ENCODE measurements at regions of chr15 and their contacts with region 1.

Region 1: DNA sequence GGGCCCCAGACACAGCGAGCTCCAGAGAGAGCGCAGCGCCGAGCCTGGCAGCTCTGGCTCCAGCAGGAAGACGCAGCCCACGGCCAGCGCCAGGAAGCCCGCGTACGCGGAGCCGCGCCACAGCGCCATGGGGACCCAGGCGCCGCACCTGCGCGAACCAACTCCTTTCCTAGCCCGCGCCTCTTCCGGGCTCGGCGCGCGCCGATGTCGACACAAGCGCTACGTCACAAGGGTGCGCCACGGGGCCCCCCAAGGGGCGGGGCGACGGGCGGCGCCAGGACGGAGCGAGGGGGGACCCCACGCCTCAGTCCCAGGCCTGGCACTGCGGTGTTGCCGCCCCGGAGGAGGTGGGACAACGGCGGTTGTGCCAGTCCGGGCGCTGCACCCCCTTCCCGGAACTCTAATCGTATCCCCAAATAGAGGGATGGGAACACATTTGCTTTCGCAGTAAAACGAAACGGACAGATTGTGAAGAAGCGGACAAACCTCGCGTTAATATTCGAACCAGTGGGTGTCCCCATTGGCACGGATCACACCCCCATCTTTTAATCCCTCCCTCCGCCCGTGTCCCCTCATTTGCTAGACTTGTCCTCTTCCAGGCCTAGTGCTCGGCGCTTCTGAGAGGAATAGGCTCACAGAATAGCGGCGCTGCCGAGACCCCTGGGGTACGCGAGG is at the start of gene ADPGK:
- DNase-seq: peak; percentile 75 to 94
- H3K4me3 ChIP-seq: peak within 1 kb of the TSS; percentile 64
- H3K27ac ChIP-seq: peak within 1 kb of the TSS; percentile 55
- H3K4me1 ChIP-seq: peaks cover 21% of the 10 kb centered on the region
- H3K27me3 ChIP-seq: peaks cover 8% of the 10 kb centered on the region; the same call in 1 of the 2 replicates
- CTCF ChIP-seq: no peak
- total RNA-seq, gene ADPGK: 40.3 and 48.6 TPM in 2 replicates

Region 2: DNA sequence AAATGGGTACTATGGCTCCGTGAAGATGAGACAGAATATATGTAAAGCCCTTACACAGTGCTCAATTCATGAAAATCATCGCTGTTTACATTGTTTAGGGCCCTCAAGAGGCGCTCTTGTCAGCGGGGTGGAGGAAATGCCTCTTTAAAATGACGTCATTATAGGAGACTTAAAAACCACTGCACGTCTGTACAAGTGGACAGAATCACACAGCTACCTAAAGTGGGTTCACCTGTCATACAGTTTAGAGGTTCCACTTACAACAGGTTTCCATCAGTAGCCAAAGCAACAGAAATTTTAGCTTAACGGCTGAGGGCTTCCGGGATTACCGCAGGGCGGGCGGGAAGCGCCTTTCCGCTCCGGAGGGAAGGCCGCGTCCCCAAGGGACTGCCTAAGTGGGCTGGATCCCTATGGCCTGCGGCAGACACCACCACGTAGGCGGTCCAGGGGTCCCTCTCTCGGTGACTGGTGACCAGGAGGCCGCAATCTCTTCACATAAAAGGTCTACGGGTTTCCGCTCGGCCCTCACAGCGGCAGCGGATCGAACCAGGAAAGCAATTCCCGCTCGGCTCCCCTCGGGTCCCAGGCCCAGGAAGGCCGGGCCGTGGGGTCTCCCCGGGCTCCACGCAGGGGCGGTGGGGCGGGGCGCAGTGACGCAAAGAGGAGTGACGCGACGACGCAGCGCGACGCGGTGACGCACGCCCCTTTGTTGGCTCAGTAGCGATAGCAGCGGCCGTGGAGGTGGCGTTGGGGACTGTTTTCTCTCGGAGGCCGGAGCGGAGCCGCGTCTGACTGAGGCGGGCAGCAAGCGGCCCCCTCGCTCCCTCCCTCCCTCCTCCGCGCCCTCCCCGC is 309.9 kb before region 1 on chr15 and contains the start of gene ARIH1:
- CTCF ChIA-PET with region 1: no interaction called
- POLR2A ChIA-PET with region 1: no interaction called
- intact Hi-C with region 1: loop called (anchors 10 kb)
- DNase-seq: peak; percentile 84 to 96
- H3K4me3 ChIP-seq: peak within 1 kb of the TSS; percentile 67
- H3K27ac ChIP-seq: peak within 1 kb of the TSS; percentile 94
- H3K4me1 ChIP-seq: peaks cover 27% of the 10 kb centered on the region
- H3K27me3 ChIP-seq: no peaks in the 10 kb centered on the region
- CTCF ChIP-seq: peak; percentile 45; the same call in 1 of the 2 replicates
- total RNA-seq, gene ARIH1: 144 and 190 TPM in 2 replicates

Region 3: GRCh38 chr15:72599855-72600464 is 183.7 kb before region 1 on chr15:
- CTCF ChIA-PET with region 1: no interaction called
- POLR2A ChIA-PET with region 1: no interaction called
- intact Hi-C with region 1: loop called (anchors 10 kb)
- DNase-seq: peak; percentile 22 to 39
- H3K4me3 ChIP-seq: no peak overlapping the region
- H3K27ac ChIP-seq: no peak overlapping the region
- H3K4me1 ChIP-seq: no peaks in the 10 kb centered on the region
- H3K27me3 ChIP-seq: no peaks in the 10 kb centered on the region
- CTCF ChIP-seq: peak; percentile 82

Region 4: DNA sequence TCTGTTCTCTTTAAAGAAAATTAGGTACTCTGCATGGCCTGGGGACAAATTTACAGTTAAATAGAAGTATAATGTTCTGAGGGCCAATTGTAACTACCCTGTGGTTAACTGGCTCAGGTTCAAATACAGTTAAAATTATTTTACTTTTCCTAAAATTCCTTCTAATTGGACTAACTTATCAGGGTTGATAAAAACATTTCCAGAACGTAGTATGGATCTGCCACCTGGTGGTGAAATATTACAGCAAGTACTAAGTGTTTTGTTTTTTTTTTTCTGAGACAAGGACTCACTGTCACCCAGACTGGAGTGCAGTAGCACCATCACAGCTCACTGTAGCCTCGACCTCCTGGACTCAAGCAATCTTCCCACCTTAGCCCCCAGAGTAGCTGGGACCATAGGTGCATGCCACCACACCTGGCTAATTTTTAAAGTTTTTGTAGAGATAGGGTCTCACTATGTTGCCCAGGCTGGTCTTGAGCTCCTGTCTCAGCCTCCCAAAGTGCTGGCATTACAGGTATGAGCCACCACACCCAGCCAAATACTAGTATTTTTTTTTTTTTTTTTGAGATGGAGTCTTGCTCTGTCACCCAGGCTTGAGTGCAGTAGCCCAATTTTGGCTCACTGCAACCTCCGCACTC is 297.7 kb after region 1 on chr15:
- CTCF ChIA-PET with region 1: no interaction called
- POLR2A ChIA-PET with region 1: no interaction called
- intact Hi-C with region 1: loop called (anchors 1 kb)
- DNase-seq: peak in 1 of 2 experiments; percentile 37
- H3K4me3 ChIP-seq: no peak overlapping the region
- H3K27ac ChIP-seq: no peak overlapping the region
- H3K4me1 ChIP-seq: no peaks in the 10 kb centered on the region
- H3K27me3 ChIP-seq: no peaks in the 10 kb centered on the region
- CTCF ChIP-seq: peak; percentile 78

Region 5: DNA sequence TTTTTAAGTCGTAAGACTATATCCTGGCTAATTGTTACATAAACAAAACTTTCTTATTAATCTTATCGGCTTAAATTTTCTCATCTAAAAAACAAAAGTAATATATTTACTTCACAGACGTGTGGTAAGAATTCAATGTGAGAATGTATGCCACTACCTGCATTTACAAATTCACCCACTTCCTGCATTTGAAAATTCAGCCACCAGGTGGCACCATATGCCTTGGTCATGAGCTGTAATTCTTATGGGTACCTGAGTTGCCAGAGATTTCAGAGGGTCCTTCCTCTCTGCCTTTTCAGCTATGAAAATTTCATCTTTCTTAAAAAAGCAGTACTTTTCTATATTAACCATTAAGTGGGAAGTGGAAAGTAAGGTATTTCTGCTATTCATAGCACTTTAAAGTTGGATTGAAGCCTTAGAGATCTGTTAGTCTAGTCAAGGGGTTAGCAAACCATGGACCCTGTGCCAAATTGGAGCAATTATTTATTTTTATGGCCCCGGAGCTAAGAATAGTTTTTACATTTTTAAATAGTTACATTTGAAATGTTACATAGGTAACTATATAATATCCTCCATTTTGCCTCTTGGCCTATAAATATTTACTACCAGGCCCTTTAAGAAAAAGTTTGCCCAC is 457.3 kb after region 1 on chr15:
- CTCF ChIA-PET with region 1: no interaction called
- POLR2A ChIA-PET with region 1: no interaction called
- intact Hi-C with region 1: loop called (anchors 10 kb)
- DNase-seq: peak; percentile 49 to 53
- H3K4me3 ChIP-seq: no peak overlapping the region
- H3K27ac ChIP-seq: no peak overlapping the region
- H3K4me1 ChIP-seq: no peaks in the 10 kb centered on the region
- H3K27me3 ChIP-seq: no peaks in the 10 kb centered on the region
- CTCF ChIP-seq: peak; percentile 93

Measured in PC-9 (cell line).